ENCODE measurements at regions of chr16 and their contacts with region 1.

Region 1: GRCh38 chr16:71883849-71884638 is at the start of gene ZNF821:
- DNase-seq: peak; percentile 73
- ATAC-seq: peak; percentile 60
- H3K4me3 Mint-ChIP-seq: peak within 1 kb of the TSS; percentile 90
- H3K27ac Mint-ChIP-seq: peak within 1 kb of the TSS; percentile 89
- H3K4me1 Mint-ChIP-seq: peaks cover 48% of the 10 kb centered on the region
- H3K27me3 Mint-ChIP-seq: peaks cover 21% of the 10 kb centered on the region
- total RNA-seq, gene ZNF821: 3.7 to 4.1 TPM

Region 2: GRCh38 chr16:71845639-71846430 is 38.2 kb before region 1 on chr16 and contains the start of gene ATXN1L:
- CTCF ChIA-PET with region 1: interaction called, 39 read pairs
- POLR2A ChIA-PET with region 1: interaction called, 30 read pairs
- DNase-seq: peak; percentile 93
- ATAC-seq: peak; percentile 97
- H3K4me3 Mint-ChIP-seq: peak within 1 kb of the TSS; percentile 90
- H3K27ac Mint-ChIP-seq: peak within 1 kb of the TSS; percentile 94
- H3K4me1 Mint-ChIP-seq: peaks cover 36% of the 10 kb centered on the region
- H3K27me3 Mint-ChIP-seq: no peaks in the 10 kb centered on the region
- total RNA-seq, gene ATXN1L: 20.3 to 22.6 TPM

Region 3: DNA sequence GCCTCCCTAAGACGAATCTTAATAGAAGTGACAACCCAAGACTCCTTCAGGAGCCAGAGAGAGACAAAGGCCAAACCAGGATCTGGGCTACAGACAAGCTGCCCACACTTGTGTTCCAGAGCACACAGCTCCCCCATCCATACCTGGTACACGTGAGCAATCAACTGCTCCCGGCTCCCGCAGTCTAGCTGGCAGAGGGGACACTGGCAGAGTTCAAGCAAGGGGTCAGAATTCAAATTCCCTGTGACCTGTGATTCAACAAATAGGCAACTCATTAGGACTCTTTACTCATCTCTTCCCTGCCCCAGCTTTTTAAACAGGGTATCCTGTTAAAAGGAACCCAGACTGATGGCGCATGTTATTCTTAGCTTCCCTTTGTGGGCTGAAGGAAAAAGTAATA is 20.0 kb before region 1 on chr16:
- CTCF ChIA-PET with region 1: interaction called, 80 read pairs
- POLR2A ChIA-PET with region 1: interaction called, 5 read pairs
- DNase-seq: no peak
- ATAC-seq: no peak
- H3K4me3 Mint-ChIP-seq: no peak overlapping the region
- H3K27ac Mint-ChIP-seq: no peak overlapping the region
- H3K4me1 Mint-ChIP-seq: no peaks in the 10 kb centered on the region
- H3K27me3 Mint-ChIP-seq: no peaks in the 10 kb centered on the region

Region 4: GRCh38 chr16:71894921-71895678 is 11.1 kb after region 1 on chr16 and contains the start of gene IST1:
- CTCF ChIA-PET with region 1: interaction called, 65 read pairs
- POLR2A ChIA-PET with region 1: interaction called, 27 read pairs
- DNase-seq: peak; percentile 99
- ATAC-seq: peak; percentile 95
- H3K4me3 Mint-ChIP-seq: peak within 1 kb of the TSS; percentile 97
- H3K27ac Mint-ChIP-seq: peak within 1 kb of the TSS; percentile 97
- H3K4me1 Mint-ChIP-seq: peaks cover 24% of the 10 kb centered on the region
- H3K27me3 Mint-ChIP-seq: no peaks in the 10 kb centered on the region
- total RNA-seq, gene IST1: 155 to 174 TPM